Dorsolateral prefrontal cortex (tissue), 120 donors: ENCODE measurements at regions of chr16 and their contacts with region 1.

Region 1: GRCh38 chr16:6947291-6947690 is 385.4 kb upstream of the RBFOX1 start:
- DNase-seq: peak in 4 of 10 donors; percentile 29 to 51 (median 34)
- H3K4me3 ChIP-seq: no peak overlapping the region
- H3K27ac ChIP-seq: peak overlapping the region in 31 of 59 donors; percentile 10 to 83 (median 51)
- H3K27me3 ChIP-seq: no peaks in the 10 kb centered on the region
- CTCF ChIP-seq: peak in 1 of 56 donors; percentile 11

Region 2: GRCh38 chr16:6977916-6978315 is 30.6 kb after region 1 on chr16:
- intact Hi-C with region 1: no loop called
- DNase-seq: no peak
- H3K4me3 ChIP-seq: no peak overlapping the region
- H3K27ac ChIP-seq: no peak overlapping the region
- H3K27me3 ChIP-seq: no peaks in the 10 kb centered on the region
- CTCF ChIP-seq: no peak

Region 3: GRCh38 chr16:7017006-7017662 is 69.8 kb after region 1 on chr16:
- intact Hi-C with region 1: loop called in 1 of 2 experiments (anchors 2 kb)
- DNase-seq: peak in 3 of 10 donors; percentile 33 to 56 (median 40)
- H3K4me3 ChIP-seq: no peak overlapping the region
- H3K27ac ChIP-seq: peak overlapping the region in 22 of 59 donors; percentile 8 to 67 (median 42)
- H3K27me3 ChIP-seq: peaks cover 0 to 5% (median 0%) of the 10 kb centered on the region in 45 donors
- CTCF ChIP-seq: no peak

Region 4: GRCh38 chr16:7044331-7044730 is 97.0 kb after region 1 on chr16:
- intact Hi-C with region 1: no loop called
- DNase-seq: no peak
- H3K4me3 ChIP-seq: no peak overlapping the region
- H3K27ac ChIP-seq: no peak overlapping the region
- H3K27me3 ChIP-seq: no peaks in the 10 kb centered on the region
- CTCF ChIP-seq: no peak